Activated CD4-positive, alpha-beta T cell treated with anti-CD3 and anti-CD28 coated beads for 36 hours (primary cell): ENCODE measurements at regions of chr14 and their contacts with region 1.

Region 1: DNA sequence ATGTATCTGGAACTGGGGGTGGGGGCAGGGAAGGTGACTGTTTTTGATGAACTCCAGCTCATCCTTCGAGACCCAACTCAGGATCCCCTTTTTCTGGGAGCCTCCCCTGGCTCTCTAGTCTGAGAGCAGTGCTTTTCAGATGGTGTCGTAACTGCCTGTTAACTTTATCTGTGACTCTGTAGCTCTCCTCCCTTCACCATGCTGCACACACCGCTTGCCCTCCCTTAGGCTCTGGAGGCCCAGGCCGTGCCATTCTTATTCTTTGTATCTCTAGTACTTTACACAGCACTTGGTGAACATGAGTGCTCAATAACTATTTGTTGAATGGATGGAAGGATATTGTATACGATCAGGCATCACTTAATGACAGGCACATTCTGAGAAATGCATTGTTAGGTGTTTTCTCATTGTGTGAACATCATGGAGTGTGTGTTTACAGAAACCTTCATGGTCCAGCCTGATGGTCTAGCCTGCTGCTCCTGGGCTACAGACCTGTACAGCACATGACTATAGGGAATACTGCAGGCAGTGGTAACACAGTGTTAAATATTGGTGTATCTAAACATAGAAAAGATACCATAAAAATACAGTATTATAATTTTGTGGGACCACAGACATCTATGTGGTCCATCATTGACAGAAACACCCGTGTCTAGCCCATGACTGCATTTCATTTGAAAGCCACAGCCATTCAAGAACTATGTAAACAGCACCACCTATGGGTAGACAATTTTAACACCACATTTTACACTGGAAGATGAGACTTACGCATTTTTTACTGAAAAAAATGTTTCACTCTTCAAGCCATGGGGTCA is 91.8 kb downstream of the EML1 start:
- DNase-seq: no peak
- ATAC-seq: peak; percentile 73
- H3K4me3 Mint-ChIP-seq: no peak overlapping the region
- H3K27ac Mint-ChIP-seq: no peak overlapping the region
- H3K4me1 Mint-ChIP-seq: no peaks in the 10 kb centered on the region
- H3K27me3 Mint-ChIP-seq: peaks cover 6% of the 10 kb centered on the region

Region 2: DNA sequence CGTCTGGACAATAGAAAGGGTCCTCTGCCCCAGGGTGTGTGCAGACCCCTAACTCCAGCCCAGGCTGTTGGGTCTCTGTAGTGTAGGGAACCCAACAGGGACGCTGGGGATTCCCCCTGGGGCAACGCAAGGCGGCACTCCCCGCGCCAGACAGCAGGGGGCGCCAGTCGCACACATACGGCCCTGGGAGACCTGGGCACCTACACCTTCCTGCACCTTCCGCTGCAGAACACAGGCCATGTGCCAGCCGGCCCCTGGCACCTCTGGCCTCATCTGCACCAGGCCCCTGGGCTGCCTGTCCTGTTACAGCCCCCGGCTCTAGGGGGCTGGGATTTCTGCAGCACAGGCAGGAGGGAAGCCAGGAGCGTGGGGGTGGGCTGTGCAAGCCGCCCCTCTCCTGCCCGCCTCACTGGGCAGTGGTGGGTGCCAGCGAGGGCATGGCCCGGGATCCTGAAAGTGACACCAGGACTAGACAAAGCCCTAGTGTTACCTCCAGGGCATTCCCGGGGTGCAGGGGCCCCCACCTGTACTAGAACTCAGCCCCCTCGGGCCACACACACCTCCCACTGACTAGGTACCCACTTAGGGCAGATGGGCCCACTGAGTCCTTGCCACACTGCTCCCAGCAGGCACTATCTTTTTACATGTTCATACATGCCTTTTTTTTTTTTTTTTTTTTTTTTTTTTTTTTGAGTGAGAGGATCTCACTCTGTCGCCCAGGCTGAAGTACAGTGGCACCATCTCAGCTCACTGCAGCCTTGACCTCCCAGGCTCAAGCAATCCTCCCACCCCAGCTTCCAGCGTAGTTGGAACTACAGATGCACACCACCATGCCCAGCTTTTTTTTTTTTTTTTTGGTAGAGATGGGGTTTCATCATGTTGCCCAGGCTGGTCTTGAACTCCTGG is 366.3 kb before region 1 on chr14:
- CTCF ChIA-PET with region 1: no interaction called
- POLR2A ChIA-PET with region 1: no interaction called
- intact Hi-C with region 1: loop called (anchors 1 kb)
- DNase-seq: peak; percentile 91
- ATAC-seq: peak; percentile 93
- H3K4me3 Mint-ChIP-seq: no peak overlapping the region
- H3K27ac Mint-ChIP-seq: no peak overlapping the region
- H3K4me1 Mint-ChIP-seq: no peaks in the 10 kb centered on the region
- H3K27me3 Mint-ChIP-seq: no peaks in the 10 kb centered on the region

Region 3: DNA sequence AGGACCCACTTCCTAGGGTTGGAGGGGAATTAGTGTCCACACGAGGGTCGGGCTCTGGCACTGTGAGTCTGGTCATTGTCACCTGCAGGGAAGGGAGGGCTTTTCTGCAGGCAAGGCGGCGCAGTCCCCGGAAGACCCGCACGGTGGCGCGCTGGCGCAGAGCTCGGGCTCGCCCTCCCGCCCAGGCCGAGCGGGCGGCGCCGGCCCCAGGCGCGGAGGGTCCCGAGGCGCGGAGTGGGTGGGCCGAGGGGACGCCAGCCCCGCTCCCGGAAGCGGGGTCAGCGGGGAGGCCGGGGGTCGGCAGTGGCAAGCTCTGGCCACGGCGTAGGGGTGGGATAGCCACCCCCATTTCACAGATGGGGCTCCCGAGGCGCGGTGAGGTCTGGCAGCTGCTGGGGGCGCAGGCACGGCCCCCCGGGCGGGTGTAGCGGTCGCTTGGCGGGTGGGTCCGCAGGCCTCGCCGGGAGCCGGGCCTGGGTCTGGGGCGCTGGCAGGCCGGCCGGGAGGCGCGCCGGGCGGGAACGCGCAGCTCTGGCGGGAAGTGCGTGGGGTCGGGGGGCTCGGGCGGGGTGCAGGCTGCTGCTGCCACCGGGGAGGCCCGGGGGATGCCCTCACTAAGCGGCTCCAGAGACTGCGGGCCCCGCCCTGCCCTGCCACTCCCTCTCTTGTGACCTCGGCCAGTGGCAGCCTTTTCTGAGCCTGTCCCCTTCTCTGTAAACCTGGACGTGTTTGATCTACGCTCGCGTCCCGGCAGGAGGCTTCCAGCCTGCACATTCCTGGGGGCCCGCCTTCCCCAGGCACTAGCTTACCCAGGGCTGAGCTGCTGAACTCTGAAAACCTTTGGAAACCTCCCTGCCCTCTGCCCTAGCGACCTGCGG is 154.8 kb before region 1 on chr14:
- CTCF ChIA-PET with region 1: interaction called, 26 read pairs
- POLR2A ChIA-PET with region 1: no interaction called
- intact Hi-C with region 1: loop called (anchors 1 kb)
- DNase-seq: peak; percentile 85
- ATAC-seq: peak; percentile 90
- H3K4me3 Mint-ChIP-seq: peak overlapping the region; percentile 30
- H3K27ac Mint-ChIP-seq: no peak overlapping the region
- H3K4me1 Mint-ChIP-seq: no peaks in the 10 kb centered on the region
- H3K27me3 Mint-ChIP-seq: peaks cover 20% of the 10 kb centered on the region

Region 4: GRCh38 chr14:99872786-99873440 is 12.1 kb before region 1 on chr14:
- CTCF ChIA-PET with region 1: interaction called, 10 read pairs
- POLR2A ChIA-PET with region 1: no interaction called
- intact Hi-C with region 1: no loop called
- DNase-seq: no peak
- ATAC-seq: no peak
- H3K4me3 Mint-ChIP-seq: no peak overlapping the region
- H3K27ac Mint-ChIP-seq: no peak overlapping the region
- H3K4me1 Mint-ChIP-seq: no peaks in the 10 kb centered on the region
- H3K27me3 Mint-ChIP-seq: peaks cover 16% of the 10 kb centered on the region

Region 5: DNA sequence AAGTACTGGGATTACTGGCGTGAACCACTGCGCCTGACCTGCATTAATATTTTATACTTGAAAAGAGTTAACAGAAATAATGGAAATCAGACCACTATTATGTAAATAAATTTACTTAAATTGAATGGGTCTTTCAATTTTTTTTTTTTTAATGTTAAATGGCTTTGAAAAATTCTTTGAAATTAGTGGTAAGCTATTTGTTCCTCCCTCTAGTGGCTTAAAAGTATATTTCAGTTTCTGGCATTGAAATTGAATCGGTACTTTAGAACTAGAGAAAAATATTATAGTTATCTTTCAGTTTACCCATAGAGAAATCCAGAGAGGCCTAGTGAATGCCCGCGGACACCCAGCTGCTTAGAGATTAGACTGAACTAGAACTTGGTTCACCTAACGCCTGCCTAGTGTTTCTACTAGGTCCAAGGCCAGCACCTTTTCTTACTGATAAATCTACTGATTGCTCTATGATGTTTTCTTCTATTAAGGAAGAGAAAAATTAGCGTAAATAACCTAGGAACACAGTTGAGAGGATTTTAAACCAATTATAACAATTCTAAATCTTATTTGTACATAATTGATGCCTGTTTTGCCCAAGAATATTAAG is 14.6 kb after region 1 on chr14:
- CTCF ChIA-PET with region 1: interaction called, 47 read pairs
- POLR2A ChIA-PET with region 1: no interaction called
- intact Hi-C with region 1: no loop called
- DNase-seq: no peak
- ATAC-seq: no peak
- H3K4me3 Mint-ChIP-seq: no peak overlapping the region
- H3K27ac Mint-ChIP-seq: no peak overlapping the region
- H3K4me1 Mint-ChIP-seq: no peaks in the 10 kb centered on the region
- H3K27me3 Mint-ChIP-seq: peaks cover 3% of the 10 kb centered on the region